Posterior cingulate gyrus (tissue), 11 donors: ENCODE measurements at regions of chr10 and their contacts with region 1.

Region 1: GRCh38 chr10:24952707-24953645 is 570 bp upstream of the PRTFDC1 start:
- DNase-seq: peak; percentile 29 to 91 (median 48)

Region 2: GRCh38 chr10:24814568-24815313 is 138.2 kb before region 1 on chr10:
- intact Hi-C with region 1: loop called (anchors 10 kb)
- DNase-seq: no peak

Region 3: GRCh38 chr10:24989867-24990266 is 36.9 kb after region 1 on chr10:
- intact Hi-C with region 1: no loop called
- DNase-seq: no peak

Region 4: GRCh38 chr10:25016376-25017154 is 63.6 kb after region 1 on chr10 and contains the start of gene THNSL1:
- intact Hi-C with region 1: loop called (anchors 10 kb)
- DNase-seq: peak; percentile 96 to 100 (median 98)

Region 5: DNA sequence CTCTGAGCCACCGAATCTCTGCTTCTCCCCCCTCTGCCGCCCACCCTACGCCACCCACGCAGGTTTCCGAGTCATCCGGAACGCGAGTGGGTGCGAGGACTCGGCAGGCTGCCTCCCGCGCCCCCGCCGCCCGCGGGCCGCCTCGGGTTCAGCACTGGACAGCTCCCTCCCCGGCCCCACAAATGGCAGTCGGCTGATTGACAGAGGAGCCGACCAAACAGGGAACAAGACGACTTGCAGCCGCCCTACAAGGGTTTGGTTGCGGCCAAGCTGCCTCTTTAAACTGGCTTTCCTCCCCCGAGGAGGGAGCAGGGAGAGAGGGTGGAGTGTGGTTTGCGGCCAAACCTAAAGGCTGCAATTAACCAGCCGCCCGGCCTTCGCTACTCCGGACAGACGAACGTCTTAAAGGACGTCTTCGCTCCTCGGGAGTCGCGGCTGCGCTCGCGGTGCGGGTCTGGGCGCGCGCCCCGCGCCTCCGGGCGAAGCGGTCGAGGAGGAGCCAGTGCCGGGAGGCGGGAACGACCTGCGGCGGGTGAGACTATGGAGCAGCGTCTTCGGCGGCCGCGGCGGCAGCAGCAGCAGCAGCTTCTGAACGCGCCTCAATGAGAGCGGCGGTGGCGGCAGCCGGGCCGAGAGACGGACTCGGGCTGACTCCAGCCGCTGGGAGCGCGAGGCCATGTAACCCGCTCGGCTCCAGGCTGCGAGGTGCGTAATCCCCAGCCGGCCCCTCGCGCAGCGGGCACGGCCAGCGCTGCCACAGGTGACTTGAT is 221.7 kb after region 1 on chr10 and contains the start of gene GPR158:
- intact Hi-C with region 1: no loop called
- DNase-seq: peak; percentile 87 to 98 (median 90)